GM12878 (cell line): ENCODE measurements at regions of chr4 and their contacts with region 1.

Region 1: GRCh38 chr4:32589853-32590252 is 1869.7 kb downstream of the PCDH7 start:
- DNase-seq: no peak
- ATAC-seq: peak; percentile 53; the same call in 2 of the 3 replicates
- H3K4me3 ChIP-seq: no peak overlapping the region
- H3K27ac ChIP-seq: no peak overlapping the region
- H3K4me1 ChIP-seq: no peaks in the 10 kb centered on the region
- H3K27me3 ChIP-seq: no peaks in the 10 kb centered on the region
- CTCF ChIP-seq: no peak
- EP300 ChIP-seq: no peak
- POLR2A ChIP-seq: no peak
- RAD21 ChIP-seq: no peak

Region 2: GRCh38 chr4:32574803-32575202 is 15.1 kb before region 1 on chr4:
- CTCF ChIA-PET with region 1: no interaction called
- POLR2A ChIA-PET with region 1: no interaction called
- RAD21 ChIA-PET with region 1: no interaction called
- SMC1A ChIA-PET with region 1: interaction called, 10 read pairs
- in situ Hi-C with region 1: no loop called
- intact Hi-C with region 1: no loop called
- DNase-seq: no peak
- ATAC-seq: peak; percentile 60
- H3K4me3 ChIP-seq: no peak overlapping the region
- H3K27ac ChIP-seq: no peak overlapping the region
- H3K4me1 ChIP-seq: no peaks in the 10 kb centered on the region
- H3K27me3 ChIP-seq: no peaks in the 10 kb centered on the region
- CTCF ChIP-seq: no peak
- EP300 ChIP-seq: no peak
- POLR2A ChIP-seq: no peak
- RAD21 ChIP-seq: no peak

Region 3: DNA sequence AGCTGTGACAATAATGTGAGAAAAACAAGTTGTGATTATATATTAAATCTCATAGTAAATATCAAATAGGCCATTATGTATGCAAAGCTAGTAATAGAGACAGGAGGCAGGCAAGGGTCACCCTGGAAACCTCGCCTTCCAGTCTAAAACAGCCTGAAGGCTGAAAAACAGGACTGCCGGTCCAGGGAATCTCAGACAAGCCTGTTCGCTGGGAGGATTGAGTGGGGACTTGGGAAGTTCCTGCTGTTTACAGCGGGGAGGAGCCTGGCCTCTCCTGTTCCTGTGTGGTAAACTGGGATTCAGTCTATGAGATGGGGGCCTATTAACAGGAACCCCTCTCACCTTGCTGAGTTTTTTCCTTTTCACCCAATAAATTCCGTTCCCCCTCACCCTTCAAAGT is 447.6 kb after region 1 on chr4:
- CTCF ChIA-PET with region 1: no interaction called
- POLR2A ChIA-PET with region 1: no interaction called
- RAD21 ChIA-PET with region 1: no interaction called
- SMC1A ChIA-PET with region 1: no interaction called
- in situ Hi-C with region 1: no loop called
- intact Hi-C with region 1: no loop called
- DNase-seq: no peak
- ATAC-seq: no peak
- H3K4me3 ChIP-seq: no peak overlapping the region
- H3K27ac ChIP-seq: no peak overlapping the region
- H3K4me1 ChIP-seq: no peaks in the 10 kb centered on the region
- H3K27me3 ChIP-seq: no peaks in the 10 kb centered on the region
- CTCF ChIP-seq: no peak
- EP300 ChIP-seq: no peak
- POLR2A ChIP-seq: no peak
- RAD21 ChIP-seq: no peak